CD4-positive, alpha-beta T cell (primary cell): ENCODE measurements at regions of chr2 and their contacts with region 1.

Region 1: GRCh38 chr2:232659352-232659751 is 25.9 kb downstream of the EFHD1 start:
- DNase-seq: no peak
- ATAC-seq: no peak
- H3K4me3 ChIP-seq: no peak overlapping the region
- H3K4me3 Mint-ChIP-seq: no peak overlapping the region
- H3K27ac ChIP-seq: no peak overlapping the region
- H3K27ac Mint-ChIP-seq: no peak overlapping the region
- H3K4me1 ChIP-seq: no peaks in the 10 kb centered on the region
- H3K4me1 Mint-ChIP-seq: no peaks in the 10 kb centered on the region
- H3K27me3 ChIP-seq: no peaks in the 10 kb centered on the region
- H3K27me3 Mint-ChIP-seq: no peaks in the 10 kb centered on the region
- CTCF ChIP-seq: no peak

Region 2: GRCh38 chr2:232623783-232624727 is 35.3 kb before region 1 on chr2:
- CTCF ChIA-PET with region 1: no interaction called
- POLR2A ChIA-PET with region 1: no interaction called
- intact Hi-C with region 1: loop called in 1 of 2 experiments (anchors 1 kb)
- DNase-seq: no peak
- ATAC-seq: no peak
- H3K4me3 ChIP-seq: no peak overlapping the region
- H3K4me3 Mint-ChIP-seq: no peak overlapping the region
- H3K27ac ChIP-seq: no peak overlapping the region
- H3K27ac Mint-ChIP-seq: no peak overlapping the region
- H3K4me1 ChIP-seq: no peaks in the 10 kb centered on the region
- H3K4me1 Mint-ChIP-seq: no peaks in the 10 kb centered on the region
- H3K27me3 ChIP-seq: peaks cover 6 to 18% of the 10 kb centered on the region in 2 experiments
- H3K27me3 Mint-ChIP-seq: peaks cover 25% of the 10 kb centered on the region
- CTCF ChIP-seq: no peak